ENCODE measurements at regions of chr17 and their contacts with region 1.

Region 1: DNA sequence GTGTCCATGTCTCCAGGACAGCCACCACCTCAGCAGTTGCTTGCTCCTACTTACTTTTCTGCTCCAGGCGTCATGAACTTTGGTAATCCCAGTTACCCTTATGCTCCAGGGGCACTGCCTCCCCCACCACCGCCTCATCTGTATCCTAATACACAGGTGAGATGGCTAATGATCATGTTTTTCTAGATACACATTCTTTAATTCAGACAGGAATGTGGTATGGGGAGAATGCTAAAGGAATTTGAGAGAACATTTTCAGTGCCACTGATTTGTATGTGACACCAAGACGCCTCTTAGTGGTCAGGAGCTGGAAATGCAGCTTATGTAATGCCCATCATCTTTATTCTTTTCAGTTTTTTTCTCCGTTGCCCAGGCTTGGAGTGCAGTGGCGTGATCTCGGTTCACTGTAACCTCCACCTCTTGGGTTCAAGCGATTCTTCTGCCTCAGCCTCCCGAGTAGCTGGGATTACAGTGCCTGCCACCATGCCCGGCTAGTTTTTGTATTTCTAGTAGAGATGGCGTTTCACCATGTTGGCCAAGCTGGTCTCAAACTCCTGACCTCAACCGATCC is 8.9 kb upstream of the RAPGEFL1 start:
- DNase-seq: peak in 4 of 5 donors; percentile 13 to 59 (median 56)
- H3K4me3 ChIP-seq: no peak overlapping the region
- H3K4me3 Mint-ChIP-seq: no peak overlapping the region
- H3K27ac ChIP-seq: no peak overlapping the region
- H3K27ac Mint-ChIP-seq: peak overlapping the region; percentile 12 to 96 (median 85)
- H3K4me1 ChIP-seq: no peaks in the 10 kb centered on the region
- H3K4me1 Mint-ChIP-seq: peaks cover 7 to 15% (median 9%) of the 10 kb centered on the region in 3 donors
- H3K27me3 ChIP-seq: no peaks in the 10 kb centered on the region
- H3K27me3 Mint-ChIP-seq: no peaks in the 10 kb centered on the region

Region 2: GRCh38 chr17:40062329-40063186 is 105.8 kb before region 1 on chr17 and contains the start of gene THRA:
- CTCF ChIA-PET with region 1: interaction called, 20 read pairs
- POLR2A ChIA-PET with region 1: interaction called, 5 read pairs
- DNase-seq: peak; percentile 64 to 81 (median 70)
- H3K4me3 ChIP-seq: peak within 1 kb of the TSS; percentile 81
- H3K4me3 Mint-ChIP-seq: peak within 1 kb of the TSS; percentile 88 to 97 (median 91)
- H3K27ac ChIP-seq: peak within 1 kb of the TSS; percentile 73
- H3K27ac Mint-ChIP-seq: peak within 1 kb of the TSS; percentile 80 to 97 (median 90)
- H3K4me1 ChIP-seq: peaks cover 46% of the 10 kb centered on the region
- H3K4me1 Mint-ChIP-seq: peaks cover 37 to 49% (median 41%) of the 10 kb centered on the region in 3 donors
- H3K27me3 ChIP-seq: no peaks in the 10 kb centered on the region
- H3K27me3 Mint-ChIP-seq: peaks cover 0 to 2% of the 10 kb centered on the region in 2 donors
- total RNA-seq, gene THRA: 12.6 to 13.2 TPM

Region 3: DNA sequence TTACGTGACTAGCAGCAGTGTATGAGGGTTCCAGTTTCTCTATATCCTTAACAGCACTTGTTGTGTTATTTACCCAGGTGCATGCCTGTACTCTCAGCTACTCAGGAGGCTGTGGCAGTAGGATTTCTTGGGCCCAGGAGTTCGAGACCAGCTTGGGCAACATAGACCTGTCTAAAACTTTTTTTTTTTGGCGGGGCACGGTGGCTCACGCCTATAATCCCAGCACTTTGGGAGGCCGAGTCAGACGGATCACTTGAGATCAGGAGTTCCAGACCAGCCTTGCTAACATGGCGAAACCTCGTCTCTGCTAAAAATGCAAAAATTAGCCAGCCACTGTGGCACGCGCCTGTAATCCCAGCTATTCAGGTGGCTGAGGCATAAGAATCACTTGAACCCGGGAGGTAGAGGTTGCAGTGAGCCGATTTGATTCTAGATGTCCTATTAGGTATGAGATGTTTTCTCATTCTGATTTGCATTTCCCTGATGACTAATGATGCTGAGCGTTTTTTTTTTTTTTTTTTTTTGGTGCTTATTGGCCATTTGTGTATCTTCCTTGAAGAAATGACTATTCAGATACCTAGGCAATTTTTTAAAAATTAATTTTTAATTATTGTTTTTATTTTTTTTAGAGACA is 14.6 kb before region 1 on chr17:
- CTCF ChIA-PET with region 1: interaction called, 9 read pairs
- POLR2A ChIA-PET with region 1: interaction called, 10 read pairs
- DNase-seq: no peak
- H3K4me3 ChIP-seq: no peak overlapping the region
- H3K4me3 Mint-ChIP-seq: no peak overlapping the region
- H3K27ac ChIP-seq: peak overlapping the region; percentile 54
- H3K27ac Mint-ChIP-seq: peak overlapping the region in 1 of 8 donors; percentile 60
- H3K4me1 ChIP-seq: no peaks in the 10 kb centered on the region
- H3K4me1 Mint-ChIP-seq: peaks cover 30 to 68% (median 54%) of the 10 kb centered on the region in 3 donors
- H3K27me3 ChIP-seq: no peaks in the 10 kb centered on the region
- H3K27me3 Mint-ChIP-seq: no peaks in the 10 kb centered on the region

Region 4: GRCh38 chr17:40264458-40265185 is 96.3 kb after region 1 on chr17:
- CTCF ChIA-PET with region 1: no interaction called
- POLR2A ChIA-PET with region 1: no interaction called
- DNase-seq: no peak
- H3K4me3 ChIP-seq: no peak overlapping the region
- H3K4me3 Mint-ChIP-seq: no peak overlapping the region
- H3K27ac ChIP-seq: no peak overlapping the region
- H3K27ac Mint-ChIP-seq: peak overlapping the region in 2 of 8 donors; percentile 38 to 72
- H3K4me1 ChIP-seq: no peaks in the 10 kb centered on the region
- H3K4me1 Mint-ChIP-seq: peaks cover 0 to 3% (median 0%) of the 10 kb centered on the region in 3 donors
- H3K27me3 ChIP-seq: no peaks in the 10 kb centered on the region
- H3K27me3 Mint-ChIP-seq: no peaks in the 10 kb centered on the region

Measured in CD8-positive, alpha-beta memory T cell (primary cell).